SK-N-SH (cell line): ENCODE measurements at regions of chr1 and their contacts with region 1.

Region 1: DNA sequence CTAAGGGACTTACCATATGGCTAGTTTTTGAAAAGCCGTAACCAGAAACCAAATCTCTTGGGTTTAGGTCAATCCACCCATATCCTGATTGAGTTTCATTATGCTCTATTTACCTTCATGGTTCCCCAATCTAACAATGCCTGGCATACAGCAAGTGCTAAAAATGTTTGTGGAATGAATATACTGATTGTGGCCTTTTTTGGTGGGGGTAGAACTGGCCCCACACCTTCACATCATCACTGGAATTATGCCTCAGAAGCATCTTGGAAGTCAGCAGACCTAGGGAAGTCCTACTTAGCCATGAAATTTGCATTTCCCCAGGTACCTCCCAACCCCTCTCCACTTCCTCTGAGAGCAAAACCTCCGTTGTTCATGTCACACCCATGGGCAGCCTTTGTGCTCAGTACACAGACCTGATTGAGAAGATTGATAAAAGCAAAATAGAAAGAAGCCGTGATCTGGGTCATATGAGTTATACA is 17.8 kb upstream of the SLAMF1 start:
- DNase-seq: no peak
- H3K4me3 ChIP-seq: no peak overlapping the region
- H3K27ac ChIP-seq: no peak overlapping the region
- H3K4me1 ChIP-seq: no peaks in the 10 kb centered on the region
- H3K27me3 ChIP-seq: no peaks in the 10 kb centered on the region
- CTCF ChIP-seq: no peak
- EP300 ChIP-seq: no peak
- RAD21 ChIP-seq: no peak

Region 2: GRCh38 chr1:160675641-160676410 is 11.2 kb after region 1 on chr1:
- CTCF ChIA-PET with region 1: interaction called, 10 read pairs
- POLR2A ChIA-PET with region 1: no interaction called
- DNase-seq: peak; percentile 29
- H3K4me3 ChIP-seq: peak overlapping the region in 1 of 2 experiments; percentile 4; a peak in 1 of 4 replicates
- H3K27ac ChIP-seq: no peak overlapping the region
- H3K4me1 ChIP-seq: no peaks in the 10 kb centered on the region
- H3K27me3 ChIP-seq: peaks cover 30% of the 10 kb centered on the region; the same call in 1 of the 2 replicates
- CTCF ChIP-seq: peak; percentile 80
- EP300 ChIP-seq: no peak
- RAD21 ChIP-seq: peak; percentile 68

Region 3: DNA sequence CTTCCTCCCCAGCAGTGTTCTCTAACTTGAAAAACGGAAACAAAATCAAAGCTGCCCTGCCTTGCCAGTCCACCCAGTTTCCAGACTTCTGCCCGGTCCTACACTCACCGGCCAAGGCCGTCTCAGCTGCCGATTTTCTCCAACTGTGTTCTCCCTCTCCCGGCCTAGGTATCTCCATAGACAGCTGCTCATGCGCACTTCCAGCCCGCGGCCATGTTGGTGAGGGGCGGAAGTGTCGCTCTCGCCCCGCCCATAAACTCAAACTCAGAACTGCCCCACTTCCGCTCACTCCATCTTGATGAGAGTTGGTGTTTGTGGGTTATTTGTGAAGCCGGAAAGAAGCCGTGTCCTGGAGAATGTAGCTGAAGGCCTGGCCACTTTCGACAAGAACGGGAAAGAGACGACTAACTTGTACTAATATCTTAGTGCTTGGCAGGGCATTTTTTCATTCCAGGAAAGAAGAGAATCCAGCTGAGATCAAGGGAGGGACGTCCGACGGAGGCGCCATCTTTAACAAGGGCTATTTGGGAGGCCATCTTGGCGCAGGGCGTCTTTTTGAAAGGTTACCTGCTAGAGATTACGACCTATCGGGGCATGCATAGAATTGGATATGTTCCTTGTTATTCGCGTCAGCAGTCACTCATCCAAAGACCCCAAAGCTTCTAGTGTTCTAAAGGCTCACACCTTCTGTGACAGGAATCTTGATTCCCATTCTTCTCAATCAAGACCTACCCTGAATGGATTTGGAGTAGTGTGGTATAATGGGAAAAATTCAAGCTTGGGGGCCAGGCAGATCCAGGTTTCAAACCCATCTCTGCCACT is 381.3 kb after region 1 on chr1 and contains the start of gene USF1:
- CTCF ChIA-PET with region 1: no interaction called
- POLR2A ChIA-PET with region 1: no interaction called
- DNase-seq: peak; percentile 93
- H3K4me3 ChIP-seq: peak within 1 kb of the TSS; percentile 69 to 75
- H3K27ac ChIP-seq: peak within 1 kb of the TSS; percentile 93 to 99
- H3K4me1 ChIP-seq: peaks cover 0 to 7% of the 10 kb centered on the region in 2 experiments; a peak in 2 of 4 replicates
- H3K27me3 ChIP-seq: no peaks in the 10 kb centered on the region
- CTCF ChIP-seq: no peak
- EP300 ChIP-seq: no peak
- RAD21 ChIP-seq: no peak
- polyA plus RNA-seq, gene USF1: 43.1 and 61.9 TPM in 2 replicates